ENCODE measurements at regions of chr15 and their contacts with region 1.

Region 1: GRCh38 chr15:96428742-96429141 is 98.2 kb downstream of the NR2F2 start:
- DNase-seq: peak; percentile 50
- H3K4me3 ChIP-seq: no peak overlapping the region
- H3K27ac ChIP-seq: no peak overlapping the region
- H3K4me1 ChIP-seq: no peaks in the 10 kb centered on the region
- H3K27me3 ChIP-seq: no peaks in the 10 kb centered on the region
- CTCF ChIP-seq: no peak

Region 2: GRCh38 chr15:96542130-96542767 is 113.5 kb after region 1 on chr15:
- CTCF ChIA-PET with region 1: no interaction called
- POLR2A ChIA-PET with region 1: interaction called, 22 read pairs
- intact Hi-C with region 1: no loop called
- DNase-seq: peak; percentile 5
- H3K4me3 ChIP-seq: no peak overlapping the region
- H3K27ac ChIP-seq: no peak overlapping the region
- H3K4me1 ChIP-seq: no peaks in the 10 kb centered on the region
- H3K27me3 ChIP-seq: no peaks in the 10 kb centered on the region
- CTCF ChIP-seq: no peak

Region 3: GRCh38 chr15:96574782-96575181 is 146.0 kb after region 1 on chr15:
- CTCF ChIA-PET with region 1: no interaction called
- POLR2A ChIA-PET with region 1: no interaction called
- intact Hi-C with region 1: no loop called
- DNase-seq: no peak
- H3K4me3 ChIP-seq: no peak overlapping the region
- H3K27ac ChIP-seq: no peak overlapping the region
- H3K4me1 ChIP-seq: no peaks in the 10 kb centered on the region
- H3K27me3 ChIP-seq: no peaks in the 10 kb centered on the region
- CTCF ChIP-seq: no peak

Region 4: GRCh38 chr15:97026436-97027115 is 597.8 kb after region 1 on chr15:
- CTCF ChIA-PET with region 1: no interaction called
- POLR2A ChIA-PET with region 1: no interaction called
- intact Hi-C with region 1: no loop called
- DNase-seq: no peak
- H3K4me3 ChIP-seq: no peak overlapping the region
- H3K27ac ChIP-seq: no peak overlapping the region
- H3K4me1 ChIP-seq: peaks cover 11% of the 10 kb centered on the region
- H3K27me3 ChIP-seq: no peaks in the 10 kb centered on the region
- CTCF ChIP-seq: no peak